Activated naive CD4-positive, alpha-beta T cell treated with anti-CD3 and anti-CD28 coated beads for 36 hours (primary cell): ENCODE measurements at regions of chr18 and their contacts with region 1.

Region 1: DNA sequence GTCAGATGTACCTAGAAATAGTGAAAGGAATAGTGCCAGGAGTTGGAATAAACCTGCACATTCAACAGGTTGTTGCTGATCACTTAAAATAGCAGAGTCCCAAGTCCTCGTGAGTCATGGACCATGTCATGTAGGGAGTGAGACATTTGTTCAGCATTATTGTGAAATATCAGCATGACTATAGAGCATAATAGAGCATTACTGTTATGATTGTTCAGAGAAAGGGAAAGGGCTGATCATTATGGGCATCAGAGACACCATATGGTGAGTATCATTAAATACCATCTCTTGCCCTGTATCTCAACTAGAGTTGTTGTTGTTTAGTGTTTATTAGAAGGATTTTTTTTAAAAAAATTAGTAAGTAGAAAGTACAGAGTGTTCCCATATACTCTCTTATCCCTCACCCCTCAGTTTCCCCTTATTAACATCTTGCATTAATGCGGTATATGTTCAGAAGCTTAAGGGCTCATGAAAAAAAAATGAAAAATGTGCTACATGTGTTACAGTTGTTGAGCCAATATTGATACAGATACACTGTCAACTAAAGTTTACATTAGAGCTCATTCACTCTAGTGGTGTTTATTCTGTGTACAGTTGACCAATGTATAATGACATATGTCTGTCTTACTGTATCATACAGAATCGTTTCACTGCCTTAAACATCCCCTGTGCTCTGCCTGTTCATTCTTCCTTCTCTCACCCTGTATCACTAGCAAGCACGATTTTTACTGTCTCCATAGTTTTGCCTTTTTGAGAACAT is 5.7 kb downstream of the ELAC1 start:
- DNase-seq: peak; percentile 48
- H3K4me3 Mint-ChIP-seq: no peak overlapping the region
- H3K27ac Mint-ChIP-seq: peak overlapping the region; percentile 76
- H3K4me1 Mint-ChIP-seq: peaks cover 33% of the 10 kb centered on the region
- H3K27me3 Mint-ChIP-seq: no peaks in the 10 kb centered on the region

Region 2: DNA sequence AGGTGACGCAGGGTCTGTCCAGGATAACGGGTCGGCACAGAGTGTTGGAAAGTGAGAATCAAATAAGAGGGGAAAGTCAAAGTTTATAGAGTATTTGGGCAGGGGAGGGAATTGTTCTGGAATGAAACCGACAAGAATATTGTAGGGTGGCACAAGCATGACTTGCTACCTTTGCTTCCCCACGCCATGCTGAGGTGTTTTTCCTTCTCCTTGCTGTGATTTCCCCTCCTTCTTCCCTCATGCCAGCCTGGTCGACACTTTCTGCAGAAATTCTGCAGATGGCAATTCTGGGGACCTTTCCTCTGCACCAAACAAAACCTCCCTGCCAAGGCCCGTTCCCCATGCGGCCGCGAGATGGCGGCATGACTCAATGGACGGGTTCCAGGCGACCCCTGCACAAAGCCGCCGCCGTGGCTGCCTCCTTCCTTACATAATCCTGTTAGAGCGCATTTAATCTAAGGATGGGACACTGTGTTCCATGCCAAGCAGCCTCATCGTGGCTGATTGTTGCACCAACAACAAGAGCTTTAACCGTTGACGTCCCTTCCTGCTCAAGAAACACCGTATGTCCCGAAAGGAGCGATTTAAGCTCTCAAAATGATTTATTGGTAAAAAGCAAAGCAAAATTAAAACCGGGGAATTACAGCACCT is 153.7 kb before region 1 on chr18 and contains the start of gene MRO:
- CTCF ChIA-PET with region 1: interaction called, 3 read pairs
- intact Hi-C with region 1: loop called (anchors 1 kb)
- DNase-seq: peak; percentile 83
- H3K4me3 Mint-ChIP-seq: no peak within 1 kb of the TSS
- H3K27ac Mint-ChIP-seq: no peak within 1 kb of the TSS
- H3K4me1 Mint-ChIP-seq: no peaks in the 10 kb centered on the region
- H3K27me3 Mint-ChIP-seq: peaks cover 6% of the 10 kb centered on the region
- total RNA-seq, gene MRO: not detected

Region 3: GRCh38 chr18:50878345-50879301 is 94.9 kb before region 1 on chr18 and contains the start of gene ME2:
- CTCF ChIA-PET with region 1: no interaction called
- intact Hi-C with region 1: loop called (anchors 1 kb)
- DNase-seq: peak; percentile 90
- H3K4me3 Mint-ChIP-seq: peak within 1 kb of the TSS; percentile 98
- H3K27ac Mint-ChIP-seq: peak within 1 kb of the TSS; percentile 99
- H3K4me1 Mint-ChIP-seq: peaks cover 27% of the 10 kb centered on the region
- H3K27me3 Mint-ChIP-seq: peaks cover 3% of the 10 kb centered on the region
- total RNA-seq, gene ME2: 137 to 146 TPM

Region 4: DNA sequence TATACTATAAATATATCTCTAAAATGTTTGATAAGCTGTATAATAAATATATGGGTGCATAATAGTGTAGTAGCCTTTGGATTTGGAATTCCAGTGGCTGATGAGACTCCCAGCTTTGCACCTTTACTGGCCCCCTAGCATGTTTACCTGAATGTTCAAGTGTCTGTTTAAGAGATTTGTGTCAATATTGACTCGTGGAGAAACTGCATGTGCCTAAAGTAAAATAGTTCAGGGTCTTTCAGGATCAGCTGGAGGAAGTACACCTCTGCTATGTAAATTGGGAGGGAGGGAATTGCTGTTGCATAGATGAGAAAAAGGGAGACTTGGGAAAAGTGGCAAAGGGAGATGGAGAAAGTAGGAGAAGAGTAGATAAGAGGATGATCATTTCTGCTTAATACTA is 70.8 kb before region 1 on chr18:
- CTCF ChIA-PET with region 1: no interaction called
- intact Hi-C with region 1: loop called (anchors 1 kb)
- DNase-seq: no peak
- H3K4me3 Mint-ChIP-seq: no peak overlapping the region
- H3K27ac Mint-ChIP-seq: no peak overlapping the region
- H3K4me1 Mint-ChIP-seq: peaks cover 35% of the 10 kb centered on the region
- H3K27me3 Mint-ChIP-seq: no peaks in the 10 kb centered on the region

Region 5: DNA sequence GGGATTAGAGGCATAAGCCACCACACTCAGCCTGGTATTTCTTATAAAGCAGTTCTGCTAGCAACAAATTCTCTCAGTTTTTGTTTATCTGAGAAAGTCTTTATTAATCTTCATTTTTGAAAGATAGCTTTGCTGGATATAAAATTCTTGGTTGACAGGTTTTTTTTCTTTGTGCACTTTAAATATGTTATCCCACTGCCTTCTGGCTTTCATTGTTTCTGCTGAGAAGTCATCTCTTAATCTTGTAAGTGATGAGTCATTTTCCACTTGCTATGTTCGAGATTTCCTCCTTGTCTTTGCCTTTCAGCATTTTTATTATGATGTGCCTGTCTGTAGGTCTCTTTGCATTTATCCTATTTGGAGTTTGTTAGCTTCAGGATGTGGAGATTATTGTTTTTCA is 11.6 kb before region 1 on chr18:
- CTCF ChIA-PET with region 1: no interaction called
- intact Hi-C with region 1: no loop called
- DNase-seq: no peak
- H3K4me3 Mint-ChIP-seq: no peak overlapping the region
- H3K27ac Mint-ChIP-seq: no peak overlapping the region
- H3K4me1 Mint-ChIP-seq: no peaks in the 10 kb centered on the region
- H3K27me3 Mint-ChIP-seq: no peaks in the 10 kb centered on the region

Region 6: DNA sequence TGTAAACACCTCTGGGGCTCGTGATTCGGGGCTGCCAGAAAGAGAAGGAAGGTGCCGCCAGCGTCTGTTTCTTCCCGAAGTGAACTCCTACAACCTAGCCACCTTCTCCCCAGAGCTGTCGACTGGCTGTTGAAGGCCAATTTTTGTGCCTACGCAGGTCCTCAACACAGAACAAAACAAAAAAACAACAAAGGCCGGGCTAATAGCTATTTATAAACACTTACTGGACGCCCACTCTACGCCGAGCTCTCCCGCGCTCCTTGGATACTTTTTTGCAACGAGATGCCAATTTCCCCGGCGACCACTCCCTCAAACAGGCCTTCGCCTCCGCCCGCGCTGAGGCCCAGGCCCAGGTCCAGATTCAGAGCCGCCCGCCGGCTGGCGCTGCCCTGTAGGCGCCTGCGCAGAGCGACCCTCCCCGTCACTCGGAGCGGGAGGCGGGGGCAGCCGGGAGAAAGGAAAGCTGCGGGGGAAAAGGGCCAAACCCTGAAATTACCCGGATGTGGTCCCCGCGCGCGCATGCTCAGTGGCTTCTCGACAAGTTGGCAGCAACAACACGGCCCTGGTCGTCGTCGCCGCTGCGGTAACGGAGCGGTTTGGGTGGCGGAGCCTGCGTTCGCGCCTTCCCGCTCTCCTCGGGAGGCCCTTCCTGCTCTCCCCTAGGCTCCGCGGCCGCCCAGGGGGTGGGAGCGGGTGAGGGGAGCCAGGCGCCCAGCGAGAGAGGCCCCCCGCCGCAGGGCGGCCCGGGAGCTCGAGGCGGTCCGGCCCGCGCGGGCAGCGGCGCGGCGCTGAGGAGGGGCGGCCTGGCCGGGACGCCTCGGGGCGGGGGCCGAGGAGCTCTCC is 56.4 kb after region 1 on chr18 and contains the start of gene SMAD4:
- CTCF ChIA-PET with region 1: interaction called, 3 read pairs
- intact Hi-C with region 1: loop called (anchors 1 kb)
- DNase-seq: peak; percentile 98
- H3K4me3 Mint-ChIP-seq: peak within 1 kb of the TSS; percentile 98
- H3K27ac Mint-ChIP-seq: peak within 1 kb of the TSS; percentile 97
- H3K4me1 Mint-ChIP-seq: peaks cover 45% of the 10 kb centered on the region
- H3K27me3 Mint-ChIP-seq: no peaks in the 10 kb centered on the region
- total RNA-seq, gene SMAD4: 72.0 to 75.1 TPM

Region 7: GRCh38 chr18:51051105-51051712 is 77.7 kb after region 1 on chr18:
- CTCF ChIA-PET with region 1: interaction called, 8 read pairs
- intact Hi-C with region 1: loop called (anchors 1 kb)
- DNase-seq: no peak
- H3K4me3 Mint-ChIP-seq: no peak overlapping the region
- H3K27ac Mint-ChIP-seq: no peak overlapping the region
- H3K4me1 Mint-ChIP-seq: peaks cover 24% of the 10 kb centered on the region
- H3K27me3 Mint-ChIP-seq: no peaks in the 10 kb centered on the region

Region 8: GRCh38 chr18:51120809-51121596 is 147.5 kb after region 1 on chr18:
- CTCF ChIA-PET with region 1: no interaction called
- intact Hi-C with region 1: no loop called
- DNase-seq: no peak
- H3K4me3 Mint-ChIP-seq: no peak overlapping the region
- H3K27ac Mint-ChIP-seq: no peak overlapping the region
- H3K4me1 Mint-ChIP-seq: no peaks in the 10 kb centered on the region
- H3K27me3 Mint-ChIP-seq: no peaks in the 10 kb centered on the region

Region 9: GRCh38 chr18:51153659-51154371 is 180.3 kb after region 1 on chr18:
- CTCF ChIA-PET with region 1: no interaction called
- intact Hi-C with region 1: loop called (anchors 5 kb)
- DNase-seq: peak; percentile 70
- H3K4me3 Mint-ChIP-seq: peak overlapping the region; percentile 79
- H3K27ac Mint-ChIP-seq: peak overlapping the region; percentile 99
- H3K4me1 Mint-ChIP-seq: peaks cover 58% of the 10 kb centered on the region
- H3K27me3 Mint-ChIP-seq: no peaks in the 10 kb centered on the region

Region 10: GRCh38 chr18:51164761-51165281 is 191.3 kb after region 1 on chr18:
- CTCF ChIA-PET with region 1: no interaction called
- intact Hi-C with region 1: no loop called
- DNase-seq: no peak
- H3K4me3 Mint-ChIP-seq: no peak overlapping the region
- H3K27ac Mint-ChIP-seq: no peak overlapping the region
- H3K4me1 Mint-ChIP-seq: peaks cover 25% of the 10 kb centered on the region
- H3K27me3 Mint-ChIP-seq: no peaks in the 10 kb centered on the region